SK-N-SH (cell line): ENCODE measurements at regions of chr9 and their contacts with region 1.

Region 1: GRCh38 chr9:73269430-73270101 is 117.9 kb downstream of the ANXA1 start:
- DNase-seq: peak; percentile 5
- H3K4me3 ChIP-seq: no peak overlapping the region
- H3K27ac ChIP-seq: no peak overlapping the region
- H3K4me1 ChIP-seq: no peaks in the 10 kb centered on the region
- H3K27me3 ChIP-seq: no peaks in the 10 kb centered on the region
- CTCF ChIP-seq: peak; percentile 49
- EP300 ChIP-seq: no peak
- RAD21 ChIP-seq: peak; percentile 72

Region 2: DNA sequence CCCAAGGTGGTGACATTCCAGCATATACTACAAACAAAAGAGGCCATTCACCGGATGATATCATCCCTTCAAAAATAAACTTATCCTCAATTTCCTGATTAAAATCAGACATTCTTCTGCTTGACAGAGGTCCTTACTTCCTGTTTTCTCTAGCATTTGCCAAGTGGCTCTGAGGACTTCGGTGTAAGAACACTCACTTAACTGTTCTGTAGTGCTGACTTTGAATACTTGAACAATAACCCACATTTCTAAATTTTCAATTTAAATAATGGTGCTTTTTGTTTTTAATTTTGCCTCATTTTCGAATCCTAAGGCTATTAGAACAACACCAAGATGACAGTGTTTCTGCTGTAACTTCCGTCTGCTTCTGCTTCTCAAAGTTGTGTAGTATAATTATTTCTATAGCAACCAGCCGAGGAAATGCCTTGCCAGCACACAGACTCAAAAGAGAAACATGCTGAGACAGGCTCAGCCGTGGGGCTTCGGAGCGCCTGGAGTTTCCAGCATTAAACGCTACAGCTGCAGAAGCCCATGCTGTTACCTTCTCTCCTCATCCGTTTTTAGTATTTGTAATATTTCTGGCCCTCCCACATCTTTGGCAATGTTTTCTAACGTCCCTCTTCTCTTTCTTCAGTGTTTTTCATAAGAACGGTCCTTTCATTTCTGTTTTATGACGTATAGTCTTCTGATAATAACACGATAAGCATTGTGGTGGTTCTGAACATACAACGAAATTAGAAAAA is 137.4 kb before region 1 on chr9:
- CTCF ChIA-PET with region 1: no interaction called
- POLR2A ChIA-PET with region 1: no interaction called
- DNase-seq: peak; percentile 4
- H3K4me3 ChIP-seq: peak overlapping the region; percentile 50 to 54
- H3K27ac ChIP-seq: peak overlapping the region; percentile 93 to 94
- H3K4me1 ChIP-seq: peaks cover 0 to 23% of the 10 kb centered on the region in 2 experiments; a peak in 2 of 4 replicates
- H3K27me3 ChIP-seq: no peaks in the 10 kb centered on the region
- CTCF ChIP-seq: no peak
- EP300 ChIP-seq: peak in 1 of 2 experiments; percentile 48; a peak in 1 of 4 replicates
- RAD21 ChIP-seq: no peak

Region 3: DNA sequence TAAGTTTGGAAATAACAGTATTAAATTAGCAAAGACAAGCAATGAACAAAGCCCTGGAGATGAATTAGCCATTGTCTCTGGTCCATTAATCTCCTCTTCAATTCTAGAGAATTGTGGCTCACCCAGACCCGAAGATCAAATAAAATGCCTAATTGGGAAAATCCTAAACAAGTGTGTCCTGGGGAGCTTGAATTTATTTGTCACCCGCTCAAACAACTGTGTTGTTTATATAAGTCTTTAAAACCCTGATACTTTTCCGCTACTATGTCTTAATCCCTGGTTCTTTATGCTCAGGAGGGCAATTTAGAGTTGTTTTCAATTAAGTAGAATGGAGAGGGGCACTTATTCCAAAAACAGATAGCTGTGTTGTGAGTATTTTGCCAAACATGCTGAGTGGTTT is 10.5 kb after region 1 on chr9:
- CTCF ChIA-PET with region 1: interaction called, 28 read pairs
- POLR2A ChIA-PET with region 1: no interaction called
- DNase-seq: no peak
- H3K4me3 ChIP-seq: no peak overlapping the region
- H3K27ac ChIP-seq: no peak overlapping the region
- H3K4me1 ChIP-seq: no peaks in the 10 kb centered on the region
- H3K27me3 ChIP-seq: no peaks in the 10 kb centered on the region
- CTCF ChIP-seq: no peak
- EP300 ChIP-seq: no peak
- RAD21 ChIP-seq: no peak

Region 4: GRCh38 chr9:73459817-73460216 is 190.3 kb after region 1 on chr9:
- CTCF ChIA-PET with region 1: no interaction called
- POLR2A ChIA-PET with region 1: no interaction called
- DNase-seq: no peak
- H3K4me3 ChIP-seq: no peak overlapping the region
- H3K27ac ChIP-seq: no peak overlapping the region
- H3K4me1 ChIP-seq: no peaks in the 10 kb centered on the region
- H3K27me3 ChIP-seq: no peaks in the 10 kb centered on the region
- CTCF ChIP-seq: no peak
- EP300 ChIP-seq: no peak
- RAD21 ChIP-seq: no peak

Region 5: GRCh38 chr9:73565833-73566465 is 296.4 kb after region 1 on chr9:
- CTCF ChIA-PET with region 1: interaction called, 11 read pairs
- POLR2A ChIA-PET with region 1: no interaction called
- DNase-seq: no peak
- H3K4me3 ChIP-seq: no peak overlapping the region; a peak in 1 of 4 replicates
- H3K27ac ChIP-seq: no peak overlapping the region
- H3K4me1 ChIP-seq: no peaks in the 10 kb centered on the region; a peak in 1 of 4 replicates
- H3K27me3 ChIP-seq: no peaks in the 10 kb centered on the region
- CTCF ChIP-seq: peak; percentile 43
- EP300 ChIP-seq: no peak
- RAD21 ChIP-seq: peak; percentile 80

Region 6: GRCh38 chr9:74643303-74643923 is 1373.8 kb after region 1 on chr9:
- CTCF ChIA-PET with region 1: interaction called, 10 read pairs
- POLR2A ChIA-PET with region 1: no interaction called
- DNase-seq: no peak
- H3K4me3 ChIP-seq: no peak overlapping the region
- H3K27ac ChIP-seq: no peak overlapping the region
- H3K4me1 ChIP-seq: no peaks in the 10 kb centered on the region; a peak in 1 of 4 replicates
- H3K27me3 ChIP-seq: no peaks in the 10 kb centered on the region
- CTCF ChIP-seq: no peak
- EP300 ChIP-seq: no peak
- RAD21 ChIP-seq: no peak